CD4-positive, alpha-beta memory T cell (primary cell): ENCODE measurements at regions of chr7 and their contacts with region 1.

Region 1: DNA sequence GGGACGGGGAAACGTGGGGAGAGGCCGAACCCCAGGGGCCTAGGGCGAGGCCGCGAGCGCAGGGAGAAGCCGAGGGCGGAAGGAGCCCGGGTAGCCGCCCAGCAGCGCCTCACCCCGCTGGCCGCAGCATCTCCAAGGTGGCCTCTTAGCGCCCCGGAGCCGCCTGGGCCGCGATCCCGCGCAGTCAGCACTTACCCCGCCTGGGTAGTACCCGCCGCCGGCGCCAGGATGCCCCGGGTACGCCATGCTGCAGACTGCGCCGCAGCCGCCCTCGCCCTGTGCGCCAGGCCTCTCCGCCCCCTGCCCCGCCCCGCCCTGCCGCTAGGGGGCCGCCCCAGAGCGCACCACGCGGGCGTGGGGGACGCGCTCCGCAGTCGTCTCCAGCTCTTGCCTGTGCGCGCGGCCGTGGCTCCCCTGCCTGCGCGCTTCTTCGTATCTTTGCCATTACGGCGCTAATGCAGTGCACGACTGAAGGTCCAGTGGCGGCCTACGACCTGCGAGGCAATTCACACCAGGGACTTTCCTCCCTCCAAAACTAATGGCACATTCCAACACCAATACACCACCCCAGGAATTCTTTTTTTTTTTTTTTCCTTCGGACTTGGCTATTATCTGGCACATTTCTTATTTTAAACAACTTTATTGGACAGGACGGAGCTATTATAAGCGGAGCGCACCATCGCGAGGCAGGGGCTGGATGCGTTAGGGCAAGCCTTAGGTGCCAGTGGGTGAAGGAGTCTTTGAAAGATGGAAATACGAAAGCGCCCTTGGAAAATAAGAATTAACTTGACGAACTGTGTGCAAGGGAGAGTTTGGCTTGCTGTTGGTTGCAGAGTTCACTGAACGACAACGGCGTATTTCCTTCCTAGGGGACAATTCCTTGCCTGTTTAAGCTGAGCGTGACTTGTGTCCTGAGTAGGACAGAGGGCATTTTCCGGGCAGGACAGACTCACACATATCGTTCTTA is at the start of gene SRI:
- DNase-seq: peak; percentile 89 to 95 (median 93)
- H3K4me3 ChIP-seq: peak within 1 kb of the TSS; percentile 76 to 77
- H3K4me3 Mint-ChIP-seq: peak within 1 kb of the TSS; percentile 91 to 98 (median 96)
- H3K27ac ChIP-seq: peak within 1 kb of the TSS; percentile 76
- H3K27ac Mint-ChIP-seq: peak within 1 kb of the TSS; percentile 86 to 99 (median 95)
- H3K4me1 ChIP-seq: peaks cover 23% of the 10 kb centered on the region
- H3K4me1 Mint-ChIP-seq: peaks cover 25 to 46% (median 31%) of the 10 kb centered on the region in 4 donors
- H3K27me3 ChIP-seq: no peaks in the 10 kb centered on the region
- H3K27me3 Mint-ChIP-seq: peaks cover 0 to 4% of the 10 kb centered on the region in 2 donors
- total RNA-seq, gene SRI: 76.1 to 80.0 TPM

Region 2: DNA sequence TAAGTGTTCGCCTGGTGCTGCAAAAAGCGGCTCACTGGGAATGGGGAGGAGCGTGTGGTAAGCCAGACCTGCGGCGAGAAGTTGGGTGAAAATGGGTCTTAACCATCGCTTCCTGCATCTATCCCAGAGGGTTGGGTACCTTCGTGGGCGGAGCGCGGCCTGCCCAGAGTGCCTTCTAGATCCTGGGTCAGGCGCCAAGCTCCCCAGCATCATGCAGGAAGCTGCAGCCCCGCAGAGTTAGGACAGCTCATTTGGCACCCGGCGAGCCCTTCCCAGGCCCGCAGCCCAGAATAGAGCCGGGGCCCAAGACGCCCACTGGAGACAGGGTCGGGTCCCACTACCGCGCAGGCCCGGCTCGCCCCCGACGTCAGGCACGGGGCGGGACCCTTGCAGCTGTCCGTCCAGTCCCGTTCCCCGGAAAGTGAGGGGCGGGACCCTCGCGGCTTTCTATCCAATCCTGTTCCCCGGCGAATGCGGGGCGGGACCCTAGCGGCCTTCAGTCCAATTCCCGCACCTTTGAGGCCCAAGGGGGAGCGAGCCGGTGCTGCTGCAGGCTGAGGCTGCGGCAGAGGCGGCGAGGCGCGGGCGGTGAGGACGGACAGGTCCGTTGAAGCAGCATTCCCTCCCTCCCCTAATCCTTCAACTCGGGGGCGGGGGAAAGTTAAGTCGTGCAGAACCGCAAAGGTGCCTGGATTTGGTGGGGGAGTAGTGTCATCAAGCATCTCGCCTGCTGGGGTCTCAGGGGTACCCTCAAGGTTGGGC is 874.7 kb before region 1 on chr7 and contains the start of gene CROT:
- CTCF ChIA-PET with region 1: no interaction called
- POLR2A ChIA-PET with region 1: no interaction called
- intact Hi-C with region 1: loop called (anchors 10 kb)
- DNase-seq: peak; percentile 91 to 94 (median 92)
- H3K4me3 ChIP-seq: peak within 1 kb of the TSS; percentile 13 to 73
- H3K4me3 Mint-ChIP-seq: peak within 1 kb of the TSS; percentile 89 to 97 (median 96)
- H3K27ac ChIP-seq: peak within 1 kb of the TSS; percentile 80
- H3K27ac Mint-ChIP-seq: peak within 1 kb of the TSS; percentile 94 to 98 (median 95)
- H3K4me1 ChIP-seq: peaks cover 44% of the 10 kb centered on the region
- H3K4me1 Mint-ChIP-seq: peaks cover 33 to 57% (median 46%) of the 10 kb centered on the region in 4 donors
- H3K27me3 ChIP-seq: no peaks in the 10 kb centered on the region
- H3K27me3 Mint-ChIP-seq: no peaks in the 10 kb centered on the region
- total RNA-seq, gene CROT: 17.8 to 19.0 TPM

Region 3: GRCh38 chr7:87628780-87629569 is 591.1 kb before region 1 on chr7:
- CTCF ChIA-PET with region 1: no interaction called
- POLR2A ChIA-PET with region 1: no interaction called
- intact Hi-C with region 1: loop called (anchors 10 kb)
- DNase-seq: peak; percentile 17 to 51 (median 28)
- H3K4me3 ChIP-seq: peak overlapping the region in 1 of 2 donors; percentile 73
- H3K4me3 Mint-ChIP-seq: peak overlapping the region; percentile 75 to 93 (median 83)
- H3K27ac ChIP-seq: no peak overlapping the region
- H3K27ac Mint-ChIP-seq: peak overlapping the region in 4 of 7 donors; percentile 7 to 90 (median 41)
- H3K4me1 ChIP-seq: peaks cover 14% of the 10 kb centered on the region
- H3K4me1 Mint-ChIP-seq: peaks cover 7 to 16% (median 12%) of the 10 kb centered on the region in 4 donors
- H3K27me3 ChIP-seq: no peaks in the 10 kb centered on the region
- H3K27me3 Mint-ChIP-seq: peaks cover 6% of the 10 kb centered on the region in 2 donors

Region 4: GRCh38 chr7:87933945-87934698 is 285.9 kb before region 1 on chr7 and contains the start of gene ADAM22:
- CTCF ChIA-PET with region 1: interaction called, 3 read pairs
- POLR2A ChIA-PET with region 1: interaction called, 3 read pairs
- intact Hi-C with region 1: loop called (anchors 1 kb)
- DNase-seq: peak; percentile 80 to 84 (median 81)
- H3K4me3 ChIP-seq: peak within 1 kb of the TSS; percentile 52 to 64
- H3K4me3 Mint-ChIP-seq: peak within 1 kb of the TSS; percentile 88 to 93 (median 92)
- H3K27ac ChIP-seq: peak within 1 kb of the TSS; percentile 15
- H3K27ac Mint-ChIP-seq: peak within 1 kb of the TSS; percentile 55 to 85 (median 74)
- H3K4me1 ChIP-seq: peaks cover 13% of the 10 kb centered on the region
- H3K4me1 Mint-ChIP-seq: peaks cover 10 to 20% (median 12%) of the 10 kb centered on the region in 4 donors
- H3K27me3 ChIP-seq: no peaks in the 10 kb centered on the region
- H3K27me3 Mint-ChIP-seq: no peaks in the 10 kb centered on the region
- total RNA-seq, gene ADAM22: 5.2 to 7.7 TPM

Region 5: DNA sequence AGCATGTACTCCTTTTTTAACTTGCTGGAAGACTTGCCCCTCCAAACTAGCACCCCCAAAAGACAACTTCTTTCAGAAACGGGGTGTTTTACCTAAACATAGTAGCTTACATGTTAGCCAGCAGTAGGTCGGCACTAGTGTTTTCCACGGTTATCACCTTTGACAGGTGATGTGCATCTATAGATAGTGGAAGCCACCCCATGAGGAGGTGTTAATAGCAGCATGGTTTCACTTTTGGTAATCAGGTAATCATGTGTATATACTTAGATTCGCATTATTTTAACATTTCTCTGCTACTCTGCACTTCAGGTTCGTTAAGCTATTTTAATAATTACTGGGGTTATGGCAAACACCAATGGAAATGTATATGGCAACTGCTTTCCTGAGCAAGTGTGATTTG is 17.8 kb before region 1 on chr7:
- CTCF ChIA-PET with region 1: interaction called, 5 read pairs
- POLR2A ChIA-PET with region 1: interaction called, 4 read pairs
- intact Hi-C with region 1: loop called (anchors 2 kb)
- DNase-seq: no peak
- H3K4me3 ChIP-seq: no peak overlapping the region
- H3K4me3 Mint-ChIP-seq: no peak overlapping the region
- H3K27ac ChIP-seq: no peak overlapping the region
- H3K27ac Mint-ChIP-seq: peak overlapping the region in 1 of 7 donors; percentile 59
- H3K4me1 ChIP-seq: no peaks in the 10 kb centered on the region
- H3K4me1 Mint-ChIP-seq: peaks cover 0 to 6% (median 4%) of the 10 kb centered on the region in 4 donors
- H3K27me3 ChIP-seq: no peaks in the 10 kb centered on the region
- H3K27me3 Mint-ChIP-seq: no peaks in the 10 kb centered on the region

Region 6: DNA sequence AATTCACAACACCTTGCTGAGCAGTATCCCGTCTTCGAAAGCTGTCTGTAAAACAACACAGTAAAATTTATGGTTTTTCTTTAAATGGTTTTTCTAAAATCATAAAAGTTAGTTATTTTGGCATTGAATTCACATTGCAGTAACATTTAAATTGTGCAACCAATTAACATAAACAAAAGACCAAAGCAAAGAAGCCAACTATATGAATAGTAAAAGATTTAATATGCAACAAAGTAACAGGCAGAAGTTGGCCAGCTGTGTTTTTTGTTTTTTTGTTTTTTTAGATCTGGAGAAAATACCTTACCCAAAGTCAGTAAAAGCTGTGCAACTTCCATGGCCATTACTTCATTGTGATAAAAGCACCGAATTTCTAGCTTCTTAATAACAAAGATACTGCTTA is 11.5 kb before region 1 on chr7:
- CTCF ChIA-PET with region 1: interaction called, 14 read pairs
- POLR2A ChIA-PET with region 1: interaction called, 4 read pairs
- intact Hi-C with region 1: loop called (anchors 2 kb)
- DNase-seq: no peak
- H3K4me3 ChIP-seq: no peak overlapping the region
- H3K4me3 Mint-ChIP-seq: no peak overlapping the region
- H3K27ac ChIP-seq: no peak overlapping the region
- H3K27ac Mint-ChIP-seq: no peak overlapping the region
- H3K4me1 ChIP-seq: no peaks in the 10 kb centered on the region
- H3K4me1 Mint-ChIP-seq: peaks cover 6 to 9% (median 7%) of the 10 kb centered on the region in 4 donors
- H3K27me3 ChIP-seq: no peaks in the 10 kb centered on the region
- H3K27me3 Mint-ChIP-seq: no peaks in the 10 kb centered on the region

Region 7: GRCh38 chr7:88253640-88254039 is 33.6 kb after region 1 on chr7:
- CTCF ChIA-PET with region 1: no interaction called
- POLR2A ChIA-PET with region 1: no interaction called
- intact Hi-C with region 1: no loop called
- DNase-seq: no peak
- H3K4me3 ChIP-seq: no peak overlapping the region
- H3K4me3 Mint-ChIP-seq: no peak overlapping the region
- H3K27ac ChIP-seq: no peak overlapping the region
- H3K27ac Mint-ChIP-seq: no peak overlapping the region
- H3K4me1 ChIP-seq: no peaks in the 10 kb centered on the region
- H3K4me1 Mint-ChIP-seq: no peaks in the 10 kb centered on the region
- H3K27me3 ChIP-seq: peaks cover 5% of the 10 kb centered on the region
- H3K27me3 Mint-ChIP-seq: peaks cover 15 to 23% of the 10 kb centered on the region in 2 donors

Region 8: DNA sequence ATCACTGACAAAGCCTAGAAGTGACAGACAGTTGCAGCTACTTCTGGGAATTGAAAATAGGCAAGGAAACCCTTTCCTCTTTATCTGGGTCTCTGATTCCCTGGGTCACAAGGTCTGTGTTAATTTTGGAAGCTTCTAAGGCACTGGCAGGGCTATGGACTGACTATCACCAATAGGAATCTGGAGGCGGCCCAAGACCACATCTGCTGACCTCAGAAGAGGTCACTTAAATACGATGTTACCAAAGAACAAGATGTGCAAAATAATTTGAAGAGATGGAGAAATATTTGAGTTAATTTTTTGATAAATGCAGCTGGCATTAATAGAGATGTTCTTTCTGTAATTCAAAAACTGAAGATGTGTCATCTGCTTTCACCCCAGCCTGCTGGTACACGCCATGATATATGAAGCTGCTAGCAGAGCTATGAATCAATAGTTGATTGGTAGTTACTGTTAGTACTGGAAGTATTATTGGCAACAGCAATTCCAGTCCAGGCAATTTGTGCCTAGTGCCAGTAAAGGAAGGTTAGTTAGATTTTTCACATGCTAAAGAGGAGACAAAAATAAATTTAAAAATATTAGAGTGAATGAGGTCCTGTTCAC is 92.1 kb after region 1 on chr7:
- CTCF ChIA-PET with region 1: no interaction called
- POLR2A ChIA-PET with region 1: no interaction called
- intact Hi-C with region 1: no loop called
- DNase-seq: no peak
- H3K4me3 ChIP-seq: no peak overlapping the region
- H3K4me3 Mint-ChIP-seq: no peak overlapping the region
- H3K27ac ChIP-seq: no peak overlapping the region
- H3K27ac Mint-ChIP-seq: no peak overlapping the region
- H3K4me1 ChIP-seq: no peaks in the 10 kb centered on the region
- H3K4me1 Mint-ChIP-seq: no peaks in the 10 kb centered on the region
- H3K27me3 ChIP-seq: no peaks in the 10 kb centered on the region
- H3K27me3 Mint-ChIP-seq: peaks cover 4 to 12% of the 10 kb centered on the region in 2 donors